ENCODE measurements at regions of chr20 and their contacts with region 1.

Region 1: GRCh38 chr20:62500237-62500864 is 24.6 kb upstream of the GATA5 start:
- DNase-seq: peak; percentile 39 to 77
- H3K4me3 ChIP-seq: peak overlapping the region in 1 of 3 donors; percentile 12
- H3K27ac ChIP-seq: no peak overlapping the region
- H3K4me1 ChIP-seq: no peaks in the 10 kb centered on the region
- H3K27me3 ChIP-seq: peaks cover 0 to 22% of the 10 kb centered on the region in 2 donors
- CTCF ChIP-seq: peak; percentile 71 to 93 (median 91)
- POLR2A ChIP-seq: no peak

Region 2: GRCh38 chr20:62407221-62407992 is 92.9 kb before region 1 on chr20 and contains the start of gene CABLES2:
- intact Hi-C with region 1: no loop called
- DNase-seq: peak; percentile 91
- H3K4me3 ChIP-seq: peak within 1 kb of the TSS; percentile 65 to 91 (median 65)
- H3K27ac ChIP-seq: peak within 1 kb of the TSS; percentile 62 to 84
- H3K4me1 ChIP-seq: peaks cover 11 to 32% of the 10 kb centered on the region in 2 donors
- H3K27me3 ChIP-seq: no peaks in the 10 kb centered on the region
- CTCF ChIP-seq: peak; percentile 25 to 50 (median 39)
- POLR2A ChIP-seq: no peak
- total RNA-seq, gene CABLES2: 1.8 to 3.2 (median 2.9) TPM

Region 3: DNA sequence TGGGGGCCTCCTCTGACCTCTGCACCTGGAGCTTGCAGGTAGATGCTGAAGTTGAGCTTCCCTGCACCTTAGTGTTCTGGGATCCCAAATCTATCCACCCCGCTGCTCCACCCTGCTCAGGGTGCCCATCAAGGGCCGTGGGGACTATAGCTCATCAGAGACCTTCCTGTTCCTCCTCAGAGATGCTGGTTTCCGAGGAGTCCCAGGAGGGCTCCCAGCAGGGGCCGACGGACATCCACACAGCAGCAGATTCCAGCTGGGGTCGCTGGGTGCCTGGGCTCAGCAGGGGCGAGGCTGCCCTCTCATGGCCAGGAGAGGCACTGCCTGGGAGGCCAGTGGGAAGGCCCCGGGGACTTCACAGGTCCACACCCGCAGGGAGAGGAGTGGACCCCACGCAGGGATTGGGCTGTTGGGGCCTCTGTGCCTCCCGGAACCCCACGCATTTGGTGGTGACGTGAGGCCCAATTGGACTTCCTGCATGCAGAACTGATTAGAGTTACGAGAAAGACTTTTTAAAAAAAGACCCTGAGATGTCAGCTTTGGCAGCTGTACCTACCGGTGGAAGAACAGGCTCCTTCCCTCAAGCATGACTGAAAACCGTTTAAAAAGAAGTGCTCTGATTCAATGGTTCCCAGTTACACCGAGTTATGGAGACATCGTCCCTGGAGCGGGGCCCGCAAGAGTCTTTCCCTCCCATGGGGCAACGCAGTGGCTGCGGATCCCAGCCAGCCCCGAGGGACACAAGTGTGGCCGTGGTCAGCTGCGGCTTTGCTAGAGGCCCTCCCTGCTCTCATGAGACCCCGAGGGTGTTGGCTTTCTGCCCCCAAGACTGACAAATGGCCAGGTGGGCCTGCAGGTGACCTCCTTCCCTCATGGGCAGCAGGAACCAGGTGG is 116.6 kb after region 1 on chr20:
- intact Hi-C with region 1: loop called (anchors 10 kb)
- DNase-seq: no peak
- H3K4me3 ChIP-seq: no peak overlapping the region
- H3K27ac ChIP-seq: peak overlapping the region in 1 of 2 donors; percentile 82
- H3K4me1 ChIP-seq: no peaks in the 10 kb centered on the region
- H3K27me3 ChIP-seq: peaks cover 0 to 7% of the 10 kb centered on the region in 2 donors
- CTCF ChIP-seq: peak; percentile 52 to 84 (median 61)
- POLR2A ChIP-seq: no peak